Left ventricle myocardium inferior (tissue), 1 donor: ENCODE measurements at regions of chr2 and their contacts with region 1.

Region 1: DNA sequence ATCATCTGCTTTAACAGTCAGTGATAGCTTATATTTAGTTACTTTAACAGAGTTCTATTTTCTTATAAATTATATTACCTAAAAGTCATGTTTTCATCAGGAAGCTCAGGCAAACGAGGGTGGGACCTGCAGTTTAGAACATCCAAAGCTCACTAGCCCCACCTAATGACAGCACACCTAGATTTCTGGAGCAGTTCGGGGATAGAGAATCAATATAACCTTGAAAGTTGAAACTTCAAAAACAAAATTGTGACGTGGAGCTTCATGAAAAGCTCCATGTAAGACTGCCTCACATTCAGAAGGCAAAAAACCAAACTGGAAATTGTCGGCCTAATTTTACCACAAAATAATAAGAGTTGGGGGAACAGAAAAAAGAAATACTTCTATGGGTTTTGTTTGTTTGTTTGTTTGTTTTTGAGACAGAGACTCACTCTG is 185.9 kb upstream of the CCDC150 start:
- DNase-seq: no peak
- H3K4me3 ChIP-seq: no peak overlapping the region
- H3K27ac ChIP-seq: peak overlapping the region; percentile 7
- H3K4me1 ChIP-seq: peaks cover 13% of the 10 kb centered on the region
- H3K27me3 ChIP-seq: no peaks in the 10 kb centered on the region
- CTCF ChIP-seq: peak; percentile 75

Region 2: DNA sequence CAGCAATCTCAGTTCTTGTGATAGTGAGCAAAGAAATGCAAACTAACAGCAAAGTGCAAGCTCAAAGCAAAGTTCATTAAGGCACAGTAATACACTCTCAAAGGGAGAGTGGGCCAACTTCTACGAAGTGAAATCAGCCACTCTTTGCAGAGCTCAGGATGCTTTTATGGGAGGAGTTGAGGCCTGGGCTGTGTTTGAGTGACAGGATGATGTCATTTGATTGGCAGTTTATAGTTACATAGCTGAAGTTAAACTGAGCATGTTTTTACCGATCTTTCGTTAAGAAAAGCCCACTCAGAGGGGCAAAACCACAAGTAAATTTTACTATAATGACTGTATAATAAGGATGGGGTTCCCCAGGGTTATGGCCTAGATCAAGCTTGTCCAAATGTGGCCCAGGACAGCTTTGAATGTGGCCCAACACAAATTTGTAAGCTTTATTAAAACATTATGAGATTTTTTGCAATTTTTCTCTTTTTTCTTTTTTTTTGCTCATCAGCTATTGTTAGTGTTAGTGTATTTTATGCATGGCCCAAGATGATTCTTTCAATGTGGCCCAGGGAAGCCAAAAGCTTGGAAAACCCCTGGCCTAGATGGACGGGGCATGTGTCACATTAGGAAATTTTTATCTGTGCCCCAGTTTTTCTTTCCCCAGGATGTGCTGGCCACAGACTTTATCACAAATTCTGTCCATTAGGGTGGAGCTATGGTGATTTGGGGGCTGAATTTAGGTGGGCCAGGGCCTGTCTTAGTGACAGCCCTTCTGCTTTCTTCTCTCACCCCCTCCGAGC is 376.7 kb before region 1 on chr2:
- intact Hi-C with region 1: loop called (anchors 5 kb)
- DNase-seq: no peak
- H3K4me3 ChIP-seq: no peak overlapping the region
- H3K27ac ChIP-seq: no peak overlapping the region
- H3K4me1 ChIP-seq: peaks cover 18% of the 10 kb centered on the region
- H3K27me3 ChIP-seq: no peaks in the 10 kb centered on the region
- CTCF ChIP-seq: no peak

Region 3: DNA sequence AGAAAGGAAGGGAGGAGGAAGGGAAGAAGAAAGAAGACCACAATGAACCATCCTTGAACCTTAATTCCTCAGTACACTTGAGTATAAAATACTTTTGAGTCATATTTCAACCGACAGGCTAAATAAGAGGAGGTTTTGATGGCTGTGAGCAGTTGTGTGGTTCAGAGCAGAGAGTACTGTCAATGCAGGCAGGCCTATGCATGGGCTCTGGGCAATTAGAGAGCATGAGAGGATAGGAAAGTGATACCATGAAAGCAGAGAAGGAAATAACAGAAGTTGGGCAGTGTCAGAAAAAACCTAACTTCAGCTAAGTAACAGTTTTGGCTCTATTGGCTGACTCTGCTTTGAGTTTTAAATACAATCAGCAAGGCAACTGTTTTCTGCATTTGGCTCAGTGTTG is 158.6 kb before region 1 on chr2:
- intact Hi-C with region 1: loop called (anchors 5 kb)
- DNase-seq: no peak
- H3K4me3 ChIP-seq: no peak overlapping the region
- H3K27ac ChIP-seq: peak overlapping the region; percentile 27
- H3K4me1 ChIP-seq: peaks cover 53% of the 10 kb centered on the region
- H3K27me3 ChIP-seq: no peaks in the 10 kb centered on the region
- CTCF ChIP-seq: no peak

Region 4: GRCh38 chr2:196384729-196385128 is 68.9 kb before region 1 on chr2:
- intact Hi-C with region 1: no loop called
- DNase-seq: no peak
- H3K4me3 ChIP-seq: no peak overlapping the region
- H3K27ac ChIP-seq: no peak overlapping the region
- H3K4me1 ChIP-seq: peaks cover 34% of the 10 kb centered on the region
- H3K27me3 ChIP-seq: no peaks in the 10 kb centered on the region
- CTCF ChIP-seq: no peak